Transverse colon (tissue), 4 donors: ENCODE measurements at regions of chr19 and their contacts with region 1.

Region 1: DNA sequence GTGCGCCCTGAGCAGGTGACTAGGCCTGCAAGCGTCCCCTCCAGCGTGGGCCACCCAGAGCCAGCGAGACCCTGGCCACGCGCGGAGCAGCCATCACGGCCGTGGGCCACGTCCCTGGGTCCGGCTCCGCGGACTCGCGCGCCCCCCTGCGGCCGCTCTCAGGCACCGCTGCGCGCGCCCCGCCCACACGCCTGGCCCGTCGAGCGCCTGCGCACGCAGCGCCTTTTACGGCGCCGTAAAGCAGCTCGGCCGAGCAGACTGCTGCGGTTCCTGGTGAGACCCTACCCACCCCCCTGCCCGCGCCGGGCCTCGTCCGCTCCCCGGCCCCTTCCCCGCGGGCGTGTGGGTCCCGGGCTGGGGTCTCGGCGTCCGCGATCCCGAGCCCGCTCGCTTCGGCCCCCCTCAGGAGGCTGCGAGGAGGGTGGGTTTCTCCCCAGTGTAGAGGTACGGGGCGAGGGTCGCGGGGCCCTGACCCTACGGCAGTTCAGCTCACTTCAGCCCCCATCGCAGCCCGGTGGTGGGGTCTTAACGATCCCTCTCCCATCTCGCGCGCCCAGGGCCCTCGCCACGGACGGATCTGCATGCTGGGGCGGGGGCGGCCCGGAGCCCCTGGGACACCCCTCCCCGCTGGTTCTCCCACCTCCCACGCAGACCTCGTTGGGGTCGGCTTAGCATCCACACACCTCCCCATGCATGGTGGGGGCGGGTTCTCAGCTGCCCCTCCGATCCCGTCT is at the start of gene TRAPPC5:
- DNase-seq: peak; percentile 89
- H3K4me3 ChIP-seq: peak within 1 kb of the TSS; percentile 76 to 98 (median 94)
- H3K27ac ChIP-seq: peak within 1 kb of the TSS; percentile 84 to 90 (median 89)
- H3K4me1 ChIP-seq: peaks cover 0 to 14% (median 9%) of the 10 kb centered on the region in 4 donors
- H3K27me3 ChIP-seq: peaks cover 24% of the 10 kb centered on the region
- CTCF ChIP-seq: peak in 4 of 5 experiments; percentile 83 to 98 (median 90)
- EP300 ChIP-seq: no peak
- POLR2A ChIP-seq: peak; percentile 32
- total RNA-seq, gene TRAPPC5: 15.1 to 63.5 (median 34.4) TPM

Region 2: DNA sequence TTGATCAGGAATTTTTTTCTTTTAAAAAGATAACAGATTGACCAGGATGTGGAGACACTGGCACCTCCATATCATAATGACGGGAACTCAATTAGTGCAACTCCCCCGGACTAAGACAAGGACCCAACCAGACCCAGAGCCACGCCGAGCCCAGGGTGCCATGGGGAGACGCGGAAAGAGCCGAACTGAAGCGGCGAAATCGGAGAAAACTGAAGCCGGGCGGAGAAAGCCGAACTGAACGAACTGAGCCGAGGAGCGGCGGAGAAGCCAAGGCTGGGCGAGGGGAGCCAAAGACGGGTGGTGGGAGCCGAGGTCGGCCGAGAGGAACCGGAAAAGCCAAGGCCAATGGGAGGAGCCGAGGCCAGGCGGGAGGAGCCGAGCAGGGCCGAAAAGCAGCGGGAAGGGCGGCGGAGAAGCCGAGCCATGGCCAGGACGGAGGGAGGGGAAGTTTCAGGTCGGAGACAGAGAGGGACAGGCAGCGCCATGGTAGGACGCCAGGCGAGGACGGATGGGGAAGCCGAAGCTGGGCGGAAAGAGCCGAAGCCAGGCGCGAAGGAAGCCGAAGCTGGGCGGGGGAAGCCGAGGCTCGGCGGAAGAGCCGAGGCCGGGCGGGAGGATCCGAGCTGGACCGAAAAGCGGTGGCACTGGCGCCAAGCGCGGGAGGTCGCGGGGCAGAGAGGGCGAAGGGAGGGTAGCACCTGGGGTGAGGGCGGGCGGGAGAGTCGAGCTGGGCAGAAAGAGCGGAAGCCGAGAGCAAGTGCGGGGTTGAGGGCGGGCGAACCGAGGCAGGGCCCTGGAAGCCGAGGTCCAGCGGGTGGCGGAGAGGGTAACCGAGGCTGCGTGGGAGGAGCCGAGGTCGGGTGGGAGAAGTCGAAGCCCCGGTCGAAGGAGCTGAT is 581.8 kb before region 1 on chr19:
- in situ Hi-C with region 1: no loop called
- intact Hi-C with region 1: loop called (anchors 10 kb)
- DNase-seq: peak; percentile 94
- H3K4me3 ChIP-seq: peak overlapping the region; percentile 54 to 77 (median 70)
- H3K27ac ChIP-seq: peak overlapping the region; percentile 90 to 97 (median 95)
- H3K4me1 ChIP-seq: peaks cover 0 to 23% (median 7%) of the 10 kb centered on the region in 4 donors
- H3K27me3 ChIP-seq: peaks cover 5% of the 10 kb centered on the region
- CTCF ChIP-seq: peak in 2 of 5 experiments; percentile 9 to 30
- EP300 ChIP-seq: no peak
- POLR2A ChIP-seq: peak; percentile 57

Region 3: DNA sequence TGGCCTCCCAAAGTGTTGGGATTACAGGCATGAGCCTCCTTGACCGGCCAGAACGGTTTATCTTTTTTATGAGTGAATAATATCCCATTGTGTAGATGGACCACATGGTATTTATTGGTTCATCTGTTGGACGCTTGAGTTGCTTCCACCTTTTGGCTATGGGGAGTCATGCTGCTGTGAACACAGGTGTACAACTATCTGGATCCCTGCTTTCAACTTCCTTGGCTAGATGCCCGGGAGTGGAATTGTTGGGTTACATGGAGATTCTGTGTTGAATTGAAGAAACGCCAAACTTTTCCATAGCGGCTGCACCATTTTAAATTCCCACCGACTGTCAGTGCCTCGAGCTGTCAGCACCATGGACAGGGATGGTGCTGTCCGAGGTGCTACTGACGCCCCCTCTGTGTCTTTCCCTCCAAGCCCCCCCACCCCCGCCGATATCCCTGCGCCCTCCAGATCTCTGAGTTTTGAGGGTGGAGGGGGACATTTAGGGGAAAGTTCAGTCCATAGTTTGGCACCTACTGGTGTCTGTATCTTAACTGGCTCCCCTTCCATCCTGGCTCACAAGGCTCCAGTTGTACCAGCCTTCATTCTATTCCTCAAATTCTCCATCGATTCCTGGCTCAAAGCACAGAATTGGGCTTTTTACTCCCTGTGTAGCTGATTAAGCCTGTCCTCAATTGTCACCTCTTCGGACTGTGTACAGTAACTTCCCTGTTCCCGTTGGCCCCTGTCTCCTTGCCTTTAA is 118.0 kb before region 1 on chr19:
- in situ Hi-C with region 1: loop called in 1 of 4 experiments (anchors 10 kb)
- intact Hi-C with region 1: no loop called
- DNase-seq: no peak
- H3K4me3 ChIP-seq: no peak overlapping the region
- H3K27ac ChIP-seq: no peak overlapping the region
- H3K4me1 ChIP-seq: no peaks in the 10 kb centered on the region
- H3K27me3 ChIP-seq: no peaks in the 10 kb centered on the region
- CTCF ChIP-seq: no peak
- EP300 ChIP-seq: no peak
- POLR2A ChIP-seq: no peak

Region 4: GRCh38 chr19:7652061-7652641 is 28.6 kb before region 1 on chr19:
- in situ Hi-C with region 1: no loop called
- intact Hi-C with region 1: loop called (anchors 1 kb)
- DNase-seq: peak; percentile 89
- H3K4me3 ChIP-seq: peak overlapping the region in 2 of 4 donors; percentile 17 to 36
- H3K27ac ChIP-seq: peak overlapping the region; percentile 14 to 44 (median 37)
- H3K4me1 ChIP-seq: peaks cover 4 to 6% (median 4%) of the 10 kb centered on the region in 4 donors
- H3K27me3 ChIP-seq: peaks cover 3% of the 10 kb centered on the region
- CTCF ChIP-seq: peak; percentile 97 to 99 (median 99)
- EP300 ChIP-seq: no peak
- POLR2A ChIP-seq: no peak